Head of caudate nucleus (tissue), 42 donors: ENCODE measurements at regions of chr15 and their contacts with region 1.

Region 1: DNA sequence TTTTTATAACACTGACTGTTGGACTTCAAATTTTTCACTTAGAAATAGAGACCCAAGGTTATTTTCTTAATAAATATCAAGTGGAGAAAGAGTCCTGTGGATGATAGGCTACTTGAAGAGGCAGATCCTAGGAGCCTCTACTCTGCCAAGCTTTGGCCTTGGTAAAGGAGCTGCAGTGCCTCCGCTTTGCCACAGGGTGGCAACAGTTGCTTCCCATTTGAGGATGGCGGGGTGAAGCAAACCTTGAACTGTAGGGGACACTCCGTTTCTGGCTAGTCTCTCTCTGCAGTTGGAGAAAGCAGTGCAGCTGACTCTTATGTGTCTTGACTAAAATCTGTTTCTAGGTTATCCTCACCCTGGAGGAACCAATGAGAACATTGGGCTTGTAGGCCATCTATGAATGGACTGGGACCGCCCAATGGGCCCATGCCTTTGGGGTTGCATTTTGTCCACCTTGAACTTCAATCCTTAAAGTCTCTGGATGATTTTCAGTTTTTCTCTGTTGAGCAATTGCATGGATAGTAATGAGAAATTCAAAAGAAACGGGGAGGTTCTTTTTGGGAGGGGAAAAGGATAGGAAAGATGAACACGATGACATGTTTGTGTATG is 9.8 kb downstream of the SCG5 start:
- DNase-seq: peak in 40 of 42 donors; percentile 30 to 84 (median 57)

Region 2: DNA sequence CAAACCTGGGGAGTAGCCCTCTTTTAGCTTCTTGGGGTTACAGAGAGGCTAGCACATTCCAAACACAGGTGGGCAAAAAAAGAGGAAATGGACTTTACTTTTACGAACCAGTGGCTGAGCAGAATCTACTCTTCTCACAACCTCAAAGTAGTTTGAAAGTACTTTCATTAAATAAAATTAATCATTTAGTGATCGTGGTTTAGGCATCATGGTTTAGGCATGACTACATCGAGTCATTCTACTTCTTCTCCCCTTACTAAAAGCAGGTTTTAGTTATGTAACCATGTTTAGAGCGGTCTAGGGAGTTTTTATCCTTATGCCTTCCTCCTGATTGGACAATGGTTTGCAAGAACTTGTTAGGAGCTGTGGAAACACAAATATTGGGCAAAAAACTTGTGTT is 63.9 kb after region 1 on chr15:
- intact Hi-C with region 1: no loop called
- DNase-seq: no peak

Region 3: GRCh38 chr15:32956006-32956405 is 304.7 kb after region 1 on chr15:
- intact Hi-C with region 1: loop called (anchors 10 kb)
- DNase-seq: peak in 17 of 42 donors; percentile 11 to 59 (median 29)

Region 4: DNA sequence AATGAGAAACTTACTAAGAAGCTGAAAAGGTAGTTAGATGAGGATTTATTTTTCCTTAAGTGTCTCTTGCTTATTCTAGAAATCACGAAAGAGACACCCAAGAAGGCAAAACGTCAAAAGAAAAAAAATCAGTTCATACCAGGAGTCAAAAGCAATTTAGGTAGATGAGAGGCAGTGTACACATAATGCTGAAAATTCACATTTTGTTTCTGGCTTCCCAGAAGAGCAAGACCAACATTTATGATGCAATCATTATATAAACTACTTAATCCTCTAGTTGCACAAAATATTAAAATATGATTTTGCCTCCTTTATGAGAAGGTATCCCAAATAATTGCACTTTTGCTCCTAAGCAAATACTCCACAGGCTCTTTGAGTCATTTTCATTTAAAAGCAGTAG is 315.2 kb after region 1 on chr15:
- intact Hi-C with region 1: no loop called
- DNase-seq: no peak